Activated CD4-positive, alpha-beta T cell treated with anti-CD3 and anti-CD28 coated beads, Interleukin-2, amount 10 ng/mL, durations not matched to agents 7 days and 5 days (primary cell): ENCODE measurements at regions of chr19 and their contacts with region 1.

Region 1: GRCh38 chr19:10820173-10820572 is 15.8 kb downstream of the TMED1 start:
- DNase-seq: no peak
- H3K4me3 Mint-ChIP-seq: no peak overlapping the region
- H3K27ac Mint-ChIP-seq: no peak overlapping the region
- H3K4me1 Mint-ChIP-seq: peaks cover 15% of the 10 kb centered on the region
- H3K27me3 Mint-ChIP-seq: no peaks in the 10 kb centered on the region

Region 2: DNA sequence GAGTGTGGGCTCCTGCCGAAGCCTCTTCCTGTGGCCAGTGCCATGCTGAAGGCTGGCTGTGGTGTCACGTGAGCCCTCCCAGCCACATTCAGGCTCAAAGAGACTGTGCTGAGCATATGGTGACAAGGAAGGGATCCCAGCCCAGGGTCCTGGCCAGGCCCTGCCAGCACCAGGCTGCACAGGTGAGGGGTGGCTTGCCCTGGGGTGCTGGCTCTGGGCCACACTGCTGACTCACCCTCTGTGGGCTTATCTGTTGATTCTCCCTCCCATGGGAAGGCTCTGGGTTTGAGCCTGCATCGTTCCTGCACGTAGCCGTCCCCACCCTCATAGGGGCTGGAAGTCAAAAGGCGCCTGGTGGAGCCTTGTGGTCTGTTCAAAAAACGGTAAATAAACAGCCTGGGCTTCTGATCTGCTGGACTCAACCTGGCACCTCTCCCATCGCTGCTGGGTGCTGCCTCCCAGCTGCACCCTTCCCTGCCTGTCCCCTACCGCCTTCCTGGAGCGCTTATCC is 71.2 kb before region 1 on chr19:
- CTCF ChIA-PET with region 1: no interaction called
- POLR2A ChIA-PET with region 1: no interaction called
- DNase-seq: no peak
- H3K4me3 Mint-ChIP-seq: no peak overlapping the region
- H3K27ac Mint-ChIP-seq: peak overlapping the region; percentile 74
- H3K4me1 Mint-ChIP-seq: peaks cover 75% of the 10 kb centered on the region
- H3K27me3 Mint-ChIP-seq: no peaks in the 10 kb centered on the region

Region 3: DNA sequence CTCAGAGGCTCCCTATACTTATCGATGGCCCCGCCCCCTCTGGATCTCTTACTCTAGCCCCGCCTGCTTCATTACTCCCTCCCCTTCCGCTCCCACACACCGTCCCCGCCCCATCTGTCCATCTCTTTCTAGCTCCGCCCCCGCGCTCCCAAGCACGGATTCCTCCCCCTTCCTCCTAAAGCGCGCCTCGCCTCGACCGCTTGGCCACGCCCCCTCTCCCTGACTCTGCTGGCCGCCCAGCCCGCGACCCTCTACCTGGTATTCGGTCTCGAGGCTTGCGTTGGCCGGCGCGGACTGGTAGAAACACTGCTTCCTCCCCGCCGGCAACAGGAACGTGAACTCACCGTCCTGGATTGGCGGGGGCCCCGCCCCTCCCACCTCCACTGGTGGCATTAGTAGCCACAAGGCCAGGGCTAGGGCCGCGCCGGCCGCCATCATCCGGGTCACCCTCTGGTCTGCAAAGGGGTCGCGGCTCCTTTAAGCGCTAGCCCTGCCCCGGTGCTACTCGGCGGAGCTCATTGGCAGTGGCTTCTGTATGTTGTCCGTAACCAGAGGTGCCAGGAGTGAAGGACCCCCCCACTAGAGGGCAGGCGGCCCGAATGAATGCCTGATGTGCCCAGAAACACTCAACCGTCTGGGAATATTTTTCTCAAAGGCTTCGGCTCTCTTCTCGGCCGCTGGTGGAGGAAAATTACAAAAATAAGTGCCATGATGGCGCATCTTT is 15.7 kb after region 1 on chr19 and contains the start of gene TMED1:
- CTCF ChIA-PET with region 1: interaction called, 13 read pairs
- POLR2A ChIA-PET with region 1: no interaction called
- DNase-seq: peak; percentile 98
- H3K4me3 Mint-ChIP-seq: peak within 1 kb of the TSS; percentile 92
- H3K27ac Mint-ChIP-seq: peak within 1 kb of the TSS; percentile 99
- H3K4me1 Mint-ChIP-seq: peaks cover 22% of the 10 kb centered on the region
- H3K27me3 Mint-ChIP-seq: peaks cover 4% of the 10 kb centered on the region
- total RNA-seq, gene TMED1: 8.6 to 11.2 TPM